Activated CD8-positive, alpha-beta T cell treated with anti-CD3 and anti-CD28 coated beads, Interleukin-2, amount 10 ng/mL, durations not matched to agents 7 days and 5 days (primary cell): ENCODE measurements at regions of chr15 and their contacts with region 1.

Region 1: GRCh38 chr15:31488426-31489204 is 162.0 kb downstream of the KLF13 start:
- DNase-seq: peak; percentile 59
- ATAC-seq: peak; percentile 58
- H3K4me3 Mint-ChIP-seq: no peak overlapping the region
- H3K27ac Mint-ChIP-seq: peak overlapping the region; percentile 72
- H3K4me1 Mint-ChIP-seq: peaks cover 59% of the 10 kb centered on the region
- H3K27me3 Mint-ChIP-seq: no peaks in the 10 kb centered on the region

Region 2: DNA sequence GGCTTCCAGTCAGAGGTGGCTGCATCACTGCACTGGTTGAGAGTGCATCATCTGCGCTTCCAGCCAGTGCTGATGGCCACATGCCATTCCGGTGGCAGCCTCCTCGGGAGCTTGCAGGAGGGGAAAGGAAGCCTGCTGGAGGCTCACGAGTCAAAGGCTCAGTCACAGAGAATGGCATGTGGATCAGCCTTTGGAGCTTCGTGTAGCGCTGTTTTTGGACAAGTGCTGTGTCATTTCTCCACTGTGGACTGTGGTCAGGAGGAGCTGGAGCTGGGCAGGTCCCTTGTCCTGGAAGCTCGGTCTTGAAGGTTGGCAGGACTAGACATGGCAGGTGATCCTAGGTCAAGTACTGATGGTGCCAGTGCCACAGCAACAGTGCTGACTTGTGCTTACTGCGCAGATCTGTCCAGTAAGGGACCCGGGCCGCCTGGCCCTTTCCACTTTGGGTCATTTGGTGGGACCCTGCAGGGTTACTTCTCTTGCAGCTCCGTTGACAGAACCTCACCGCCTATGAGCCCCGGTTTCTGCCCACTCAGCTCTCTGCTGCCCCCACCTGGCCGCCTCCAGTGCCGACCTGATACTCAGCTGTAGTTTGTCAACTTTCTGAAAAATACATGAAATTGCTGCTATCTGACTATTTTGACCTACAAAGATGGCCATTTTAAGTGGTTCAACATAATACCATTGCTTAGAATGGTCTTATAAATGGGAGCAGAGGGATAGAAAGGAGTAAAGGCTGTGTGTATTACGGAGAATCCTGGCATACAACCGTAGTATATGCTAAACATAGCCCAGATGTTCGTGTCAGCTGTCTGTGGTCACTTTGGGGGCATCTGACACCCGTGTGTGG is 359.5 kb before region 1 on chr15:
- CTCF ChIA-PET with region 1: interaction called, 11 read pairs
- POLR2A ChIA-PET with region 1: no interaction called
- DNase-seq: peak; percentile 86
- ATAC-seq: peak; percentile 88
- H3K4me3 Mint-ChIP-seq: no peak overlapping the region
- H3K27ac Mint-ChIP-seq: no peak overlapping the region
- H3K4me1 Mint-ChIP-seq: no peaks in the 10 kb centered on the region
- H3K27me3 Mint-ChIP-seq: peaks cover 7% of the 10 kb centered on the region

Region 3: GRCh38 chr15:31215490-31216214 is 273.0 kb before region 1 on chr15:
- CTCF ChIA-PET with region 1: interaction called, 56 read pairs
- POLR2A ChIA-PET with region 1: interaction called, 3 read pairs
- DNase-seq: peak; percentile 89
- ATAC-seq: peak; percentile 82
- H3K4me3 Mint-ChIP-seq: peak overlapping the region; percentile 71
- H3K27ac Mint-ChIP-seq: peak overlapping the region; percentile 63
- H3K4me1 Mint-ChIP-seq: peaks cover 42% of the 10 kb centered on the region
- H3K27me3 Mint-ChIP-seq: no peaks in the 10 kb centered on the region

Region 4: GRCh38 chr15:31344823-31345605 is 143.6 kb before region 1 on chr15:
- CTCF ChIA-PET with region 1: interaction called, 16 read pairs
- POLR2A ChIA-PET with region 1: interaction called, 4 read pairs
- DNase-seq: peak; percentile 61
- ATAC-seq: peak; percentile 21
- H3K4me3 Mint-ChIP-seq: peak overlapping the region; percentile 95
- H3K27ac Mint-ChIP-seq: peak overlapping the region; percentile 97
- H3K4me1 Mint-ChIP-seq: peaks cover 98% of the 10 kb centered on the region
- H3K27me3 Mint-ChIP-seq: no peaks in the 10 kb centered on the region

Region 5: DNA sequence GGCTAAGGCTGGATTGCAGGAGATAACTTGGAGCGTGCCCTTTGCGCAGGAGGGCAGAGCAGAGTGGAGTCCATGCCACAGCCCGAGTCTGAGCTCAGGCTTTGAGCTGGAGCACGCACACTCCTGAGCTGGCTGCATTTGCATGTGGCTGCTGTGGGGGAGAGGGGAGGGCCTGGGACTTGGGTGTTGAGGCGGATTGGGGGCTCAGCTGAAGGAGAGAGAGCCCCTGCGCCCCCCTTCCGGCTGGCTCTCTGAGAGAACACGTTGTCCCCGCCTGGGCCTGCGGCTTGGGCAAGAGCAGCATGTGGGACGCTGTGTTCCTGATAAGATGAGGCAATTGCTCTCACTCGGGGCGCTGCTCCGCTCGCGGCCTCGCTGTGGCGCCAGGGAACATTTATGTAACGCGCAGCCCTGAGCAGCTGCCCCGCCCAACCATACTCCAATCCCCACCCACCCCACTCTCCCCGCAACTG is 122.9 kb before region 1 on chr15:
- CTCF ChIA-PET with region 1: interaction called, 119 read pairs
- POLR2A ChIA-PET with region 1: interaction called, 7 read pairs
- DNase-seq: peak; percentile 91
- ATAC-seq: peak; percentile 63
- H3K4me3 Mint-ChIP-seq: peak overlapping the region; percentile 54
- H3K27ac Mint-ChIP-seq: peak overlapping the region; percentile 94
- H3K4me1 Mint-ChIP-seq: peaks cover 99% of the 10 kb centered on the region
- H3K27me3 Mint-ChIP-seq: no peaks in the 10 kb centered on the region

Region 6: DNA sequence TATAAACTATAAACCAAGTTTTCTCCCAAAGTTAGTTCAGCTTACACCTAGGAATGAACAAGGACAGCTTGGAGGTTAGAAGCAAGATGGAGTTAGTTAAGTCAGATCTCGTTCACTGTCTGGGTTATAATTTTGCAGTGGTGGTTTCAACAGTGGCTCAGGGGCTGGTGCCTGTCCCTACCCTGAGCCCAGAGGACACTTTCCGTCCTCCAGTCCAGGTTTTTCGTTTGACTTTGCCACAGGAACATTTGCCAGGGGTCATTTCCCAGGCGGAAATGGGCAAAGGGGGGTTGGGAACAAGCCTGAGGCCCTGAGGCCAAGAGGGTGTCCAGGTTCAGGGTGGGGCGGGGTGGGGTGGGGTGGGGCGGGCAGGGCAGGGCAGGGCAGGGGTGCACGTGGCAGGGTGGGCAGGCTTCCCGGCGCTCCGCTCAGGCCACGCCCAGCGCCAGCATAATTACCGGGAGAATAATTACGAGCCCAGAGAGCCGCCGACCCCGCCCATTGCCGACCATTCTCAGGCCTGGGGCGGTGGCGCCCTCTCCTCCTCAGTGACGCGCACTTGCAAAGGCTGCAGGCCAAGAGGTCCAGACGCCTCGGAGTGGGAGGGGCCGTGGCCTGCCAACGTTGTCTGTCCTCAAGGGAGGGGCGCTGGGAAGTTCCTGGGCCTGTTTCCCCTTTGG is 91.6 kb before region 1 on chr15:
- CTCF ChIA-PET with region 1: interaction called, 11 read pairs
- POLR2A ChIA-PET with region 1: interaction called, 8 read pairs
- DNase-seq: peak; percentile 13
- ATAC-seq: no peak
- H3K4me3 Mint-ChIP-seq: no peak overlapping the region
- H3K27ac Mint-ChIP-seq: no peak overlapping the region
- H3K4me1 Mint-ChIP-seq: peaks cover 60% of the 10 kb centered on the region
- H3K27me3 Mint-ChIP-seq: no peaks in the 10 kb centered on the region

Region 7: GRCh38 chr15:31472636-31473384 is 15.8 kb before region 1 on chr15:
- CTCF ChIA-PET with region 1: interaction called, 95 read pairs
- POLR2A ChIA-PET with region 1: interaction called, 14 read pairs
- DNase-seq: peak; percentile 77
- ATAC-seq: peak; percentile 96
- H3K4me3 Mint-ChIP-seq: peak overlapping the region; percentile 62
- H3K27ac Mint-ChIP-seq: peak overlapping the region; percentile 89
- H3K4me1 Mint-ChIP-seq: peaks cover 38% of the 10 kb centered on the region
- H3K27me3 Mint-ChIP-seq: no peaks in the 10 kb centered on the region

Region 8: DNA sequence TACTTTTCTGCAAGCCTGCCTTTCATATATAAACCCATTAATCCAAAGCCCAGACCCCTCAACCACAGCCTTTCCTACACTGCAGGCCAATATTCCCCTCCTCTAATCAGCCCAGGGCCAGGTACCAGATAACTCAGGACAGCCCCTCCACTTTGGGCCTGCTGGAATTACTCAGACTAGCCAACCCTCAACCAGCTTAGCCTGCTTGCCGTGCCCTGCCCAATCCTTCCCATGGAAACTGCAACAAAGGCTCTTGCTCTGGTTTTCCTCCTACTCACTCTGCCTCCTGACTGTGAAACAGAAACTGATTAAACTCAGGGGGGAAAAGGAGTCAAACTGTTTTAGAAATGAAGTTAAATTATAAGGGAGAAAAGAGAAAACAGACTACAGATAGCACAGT is 86.2 kb after region 1 on chr15:
- CTCF ChIA-PET with region 1: no interaction called
- POLR2A ChIA-PET with region 1: no interaction called
- DNase-seq: no peak
- ATAC-seq: no peak
- H3K4me3 Mint-ChIP-seq: no peak overlapping the region
- H3K27ac Mint-ChIP-seq: no peak overlapping the region
- H3K4me1 Mint-ChIP-seq: no peaks in the 10 kb centered on the region
- H3K27me3 Mint-ChIP-seq: peaks cover 8% of the 10 kb centered on the region